Dendritic cell treated with granulocyte-macrophage colony-stimulating factor and Interleukin-4, amounts not matched to agents 40 ng/mL and 50 ng/mL, for 4 days (primary cell): ENCODE measurements at regions of chr7 and their contacts with region 1.

Region 1: GRCh38 chr7:130063036-130063435 is 7.3 kb upstream of the KLHDC10 start:
- H3K4me3 Mint-ChIP-seq: no peak overlapping the region
- H3K27ac Mint-ChIP-seq: no peak overlapping the region
- H3K4me1 Mint-ChIP-seq: no peaks in the 10 kb centered on the region
- H3K27me3 Mint-ChIP-seq: peaks cover 3% of the 10 kb centered on the region

Region 2: GRCh38 chr7:130831817-130832481 is 768.9 kb after region 1 on chr7:
- intact Hi-C with region 1: loop called (anchors 2 kb)
- H3K4me3 Mint-ChIP-seq: no peak overlapping the region
- H3K27ac Mint-ChIP-seq: no peak overlapping the region
- H3K4me1 Mint-ChIP-seq: no peaks in the 10 kb centered on the region
- H3K27me3 Mint-ChIP-seq: peaks cover 5% of the 10 kb centered on the region